Breast epithelium (tissue), 4 donors: ENCODE measurements at regions of chr19 and their contacts with region 1.

Region 1: GRCh38 chr19:3655402-3656072 is 28.9 kb upstream of the CACTIN start:
- DNase-seq: no peak
- H3K4me3 ChIP-seq: no peak overlapping the region
- H3K27ac ChIP-seq: no peak overlapping the region
- H3K4me1 ChIP-seq: peaks cover 0 to 2% of the 10 kb centered on the region in 2 donors
- H3K27me3 ChIP-seq: no peaks in the 10 kb centered on the region
- CTCF ChIP-seq: no peak
- POLR2A ChIP-seq: no peak

Region 2: GRCh38 chr19:3761382-3762129 is 106.0 kb after region 1 on chr19 and contains the start of gene APBA3:
- intact Hi-C with region 1: no loop called
- DNase-seq: peak; percentile 84 to 87
- H3K4me3 ChIP-seq: peak within 1 kb of the TSS; percentile 86 to 91 (median 88)
- H3K27ac ChIP-seq: peak within 1 kb of the TSS; percentile 97 to 98
- H3K4me1 ChIP-seq: no peaks in the 10 kb centered on the region
- H3K27me3 ChIP-seq: no peaks in the 10 kb centered on the region
- CTCF ChIP-seq: peak; percentile 70 to 78 (median 76)
- POLR2A ChIP-seq: peak; percentile 40
- total RNA-seq, gene APBA3: 24.0 to 24.9 (median 24.6) TPM

Region 3: GRCh38 chr19:4304530-4305252 is 649.2 kb after region 1 on chr19 and contains the start of gene FSD1:
- intact Hi-C with region 1: loop called (anchors 10 kb)
- DNase-seq: no peak
- H3K4me3 ChIP-seq: peak within 1 kb of the TSS in 2 of 3 donors; percentile 46 to 61
- H3K27ac ChIP-seq: no peak within 1 kb of the TSS
- H3K4me1 ChIP-seq: no peaks in the 10 kb centered on the region
- H3K27me3 ChIP-seq: peaks cover 4 to 9% of the 10 kb centered on the region in 2 donors
- CTCF ChIP-seq: no peak
- POLR2A ChIP-seq: no peak
- total RNA-seq, gene FSD1: 0.88 TPM in 1 of 3 donors, not detected in the others